Prostate gland (tissue), 2 donors: ENCODE measurements at regions of chr2 and their contacts with region 1.

Region 1: GRCh38 chr2:67772216-67773170 is 290.3 kb downstream of the C1D start:
- DNase-seq: no peak
- H3K4me3 ChIP-seq: no peak overlapping the region
- H3K27ac ChIP-seq: no peak overlapping the region
- H3K4me1 ChIP-seq: no peaks in the 10 kb centered on the region
- H3K27me3 ChIP-seq: no peaks in the 10 kb centered on the region
- CTCF ChIP-seq: no peak
- POLR2A ChIP-seq: no peak

Region 2: DNA sequence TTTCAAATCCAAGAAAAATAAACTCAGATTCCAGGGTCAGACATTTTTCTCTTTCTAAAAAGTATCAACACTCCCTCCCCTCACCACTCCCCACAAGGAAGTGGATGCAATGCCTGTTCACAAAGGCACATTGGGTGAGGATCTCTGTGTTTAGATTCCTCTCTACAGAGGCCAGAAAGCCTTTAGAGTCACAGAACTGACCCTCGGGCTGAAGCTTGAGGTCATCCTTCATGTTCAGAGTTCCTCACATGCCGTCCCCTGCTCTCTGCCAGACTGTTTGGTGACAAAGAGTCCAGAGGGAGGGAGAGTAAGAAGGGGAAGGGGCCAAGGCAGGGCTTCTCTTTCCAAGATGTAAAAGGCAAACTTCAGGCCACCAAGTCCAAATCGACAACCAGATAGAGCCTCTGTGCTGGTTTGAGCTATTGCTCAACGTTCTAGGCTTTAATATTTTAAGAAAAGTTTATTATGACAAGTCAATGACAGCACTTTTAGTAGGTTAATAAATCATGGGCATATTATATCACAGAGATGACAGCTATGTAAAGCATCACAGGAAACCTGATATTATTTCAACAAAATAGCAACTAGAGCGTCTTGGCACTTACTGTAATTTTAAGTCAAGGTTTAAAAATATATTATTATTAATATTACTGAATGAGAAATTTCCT is 106.0 kb before region 1 on chr2:
- intact Hi-C with region 1: loop called (anchors 5 kb)
- DNase-seq: peak; percentile 4
- H3K4me3 ChIP-seq: no peak overlapping the region
- H3K27ac ChIP-seq: peak overlapping the region in 1 of 2 donors; percentile 29
- H3K4me1 ChIP-seq: no peaks in the 10 kb centered on the region
- H3K27me3 ChIP-seq: no peaks in the 10 kb centered on the region
- CTCF ChIP-seq: no peak
- POLR2A ChIP-seq: no peak

Region 3: GRCh38 chr2:67719351-67719750 is 53.1 kb before region 1 on chr2:
- intact Hi-C with region 1: loop called (anchors 10 kb)
- DNase-seq: no peak
- H3K4me3 ChIP-seq: no peak overlapping the region
- H3K27ac ChIP-seq: no peak overlapping the region
- H3K4me1 ChIP-seq: no peaks in the 10 kb centered on the region
- H3K27me3 ChIP-seq: no peaks in the 10 kb centered on the region
- CTCF ChIP-seq: no peak
- POLR2A ChIP-seq: no peak

Region 4: DNA sequence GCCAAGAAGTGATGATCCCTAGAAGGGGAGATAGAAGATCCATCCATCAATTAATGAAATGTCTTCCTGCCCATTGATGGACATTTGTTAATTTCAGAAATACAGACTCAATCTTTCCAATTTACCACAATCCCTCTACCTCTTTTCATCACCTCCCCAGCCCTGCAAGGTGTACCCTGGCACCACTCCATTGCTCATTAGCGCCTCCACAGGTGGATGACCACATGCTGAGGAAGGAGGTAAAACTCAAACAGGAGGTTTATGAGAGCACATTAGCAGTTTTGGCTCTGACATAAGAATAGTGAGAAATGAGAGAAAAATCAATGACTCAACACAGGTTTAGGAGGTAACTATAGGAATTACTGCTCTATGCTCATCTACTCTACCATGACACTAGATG is 82.3 kb after region 1 on chr2:
- intact Hi-C with region 1: no loop called
- DNase-seq: no peak
- H3K4me3 ChIP-seq: no peak overlapping the region
- H3K27ac ChIP-seq: no peak overlapping the region
- H3K4me1 ChIP-seq: no peaks in the 10 kb centered on the region
- H3K27me3 ChIP-seq: no peaks in the 10 kb centered on the region
- CTCF ChIP-seq: no peak
- POLR2A ChIP-seq: no peak